Mammary epithelial cell (primary cell): ENCODE measurements at regions of chr9 and their contacts with region 1.

Region 1: DNA sequence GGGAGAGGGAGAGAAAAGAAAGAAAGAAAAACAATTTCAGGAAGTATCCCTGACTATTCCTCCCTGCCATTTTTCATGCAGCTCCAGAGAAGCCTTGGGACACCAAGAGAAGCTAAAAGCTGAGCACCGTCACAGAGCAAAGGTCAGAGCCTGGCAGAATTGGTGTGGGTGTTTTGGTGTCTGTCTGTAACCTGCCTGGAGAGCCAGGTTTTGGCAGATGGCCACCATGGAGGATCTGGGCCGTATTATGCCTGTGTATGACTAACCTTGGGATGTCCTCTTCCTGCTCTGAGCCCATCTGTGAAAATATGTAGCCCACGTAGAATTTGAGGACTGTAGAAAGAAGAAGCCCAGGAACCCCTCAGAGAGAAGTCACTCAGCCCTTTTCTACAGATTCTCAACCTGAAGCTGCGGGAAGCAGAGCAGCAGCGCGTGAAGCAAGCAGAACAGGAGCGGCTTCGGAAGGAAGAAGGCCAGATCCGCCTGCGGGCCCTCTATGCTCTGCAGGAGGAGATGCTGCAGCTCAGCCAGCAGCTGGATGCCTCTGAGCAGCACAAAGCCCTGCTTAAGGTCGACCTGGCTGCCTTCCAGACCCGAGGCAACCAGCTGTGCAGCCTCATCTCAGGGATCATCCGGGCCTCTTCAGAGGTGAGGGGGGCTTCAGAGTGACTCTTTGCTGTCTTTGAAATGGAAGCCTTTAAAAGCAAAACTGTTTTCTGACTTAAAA is 18.8 kb downstream of the GLE1 start:
- DNase-seq: no peak
- H3K4me3 ChIP-seq: no peak overlapping the region
- H3K27ac ChIP-seq: no peak overlapping the region
- H3K4me1 ChIP-seq: no peaks in the 10 kb centered on the region
- H3K27me3 ChIP-seq: no peaks in the 10 kb centered on the region
- CTCF ChIP-seq: no peak

Region 2: GRCh38 chr9:128175102-128175563 is 348.2 kb before region 1 on chr9:
- CTCF ChIA-PET with region 1: no interaction called
- dilution Hi-C with region 1: no loop called
- in situ Hi-C with region 1: no loop called
- intact Hi-C with region 1: no loop called
- DNase-seq: no peak
- H3K4me3 ChIP-seq: no peak overlapping the region
- H3K27ac ChIP-seq: no peak overlapping the region
- H3K4me1 ChIP-seq: no peaks in the 10 kb centered on the region
- H3K27me3 ChIP-seq: no peaks in the 10 kb centered on the region
- CTCF ChIP-seq: no peak

Region 3: DNA sequence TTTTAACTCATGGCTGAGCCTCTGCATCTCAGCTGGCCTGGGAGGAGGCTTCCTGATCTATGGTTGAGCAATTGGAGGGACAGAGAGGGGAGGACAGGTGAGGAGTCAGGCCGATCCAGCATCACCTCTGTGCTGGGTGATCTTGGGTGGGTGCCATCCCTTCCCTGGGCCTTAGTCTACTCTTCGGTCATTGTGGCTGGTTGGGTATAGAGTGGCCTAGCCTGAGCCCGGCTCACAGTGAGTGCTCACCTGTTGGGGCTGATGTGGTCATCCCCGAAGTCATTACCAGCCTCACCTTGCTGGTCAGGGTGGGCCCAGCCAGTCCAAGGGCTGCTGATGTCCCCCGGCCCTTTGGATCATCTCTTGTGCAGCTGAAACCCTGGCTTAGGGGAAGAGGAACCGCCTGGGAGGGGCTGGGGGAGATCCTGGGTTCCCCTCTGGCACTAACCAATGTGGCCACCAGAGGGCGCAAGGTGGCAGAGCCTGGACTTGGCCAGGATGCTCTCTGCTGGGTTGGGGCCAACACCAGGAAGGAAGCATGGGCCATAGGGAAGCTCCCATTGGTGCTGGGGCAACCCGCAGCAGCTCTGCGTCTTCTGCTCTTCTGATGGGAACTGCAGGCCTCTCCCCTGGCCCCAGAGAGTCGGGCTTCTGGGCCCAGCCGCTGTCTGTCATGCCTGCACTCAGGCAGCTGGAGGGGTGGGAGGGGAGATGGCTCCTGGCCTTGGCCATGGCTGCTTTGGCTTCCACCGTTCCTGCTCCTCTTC is 84.8 kb before region 1 on chr9:
- CTCF ChIA-PET with region 1: no interaction called
- dilution Hi-C with region 1: loop called (anchors 5 kb)
- in situ Hi-C with region 1: no loop called
- intact Hi-C with region 1: no loop called
- DNase-seq: peak; percentile 47
- H3K4me3 ChIP-seq: no peak overlapping the region
- H3K27ac ChIP-seq: no peak overlapping the region
- H3K4me1 ChIP-seq: no peaks in the 10 kb centered on the region
- H3K27me3 ChIP-seq: no peaks in the 10 kb centered on the region
- CTCF ChIP-seq: peak; percentile 78 to 96

Region 4: DNA sequence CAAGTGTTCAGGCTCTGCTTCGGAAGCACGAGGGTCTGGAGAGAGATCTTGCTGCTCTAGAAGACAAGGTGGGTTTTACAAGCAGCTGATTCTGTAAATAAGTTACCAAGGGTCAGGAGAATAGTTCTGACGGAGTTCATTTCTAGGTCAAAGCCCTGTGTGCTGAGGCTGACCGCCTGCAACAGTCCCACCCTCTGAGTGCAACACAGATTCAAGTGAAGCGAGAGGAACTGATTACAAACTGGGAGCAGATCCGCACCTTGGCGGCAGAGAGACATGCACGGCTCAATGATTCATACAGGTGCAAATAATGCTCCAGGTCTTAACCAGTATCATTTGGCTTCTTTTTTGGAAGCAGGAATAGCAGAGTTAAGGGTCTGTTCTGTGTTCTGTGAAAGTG is 53.8 kb after region 1 on chr9:
- CTCF ChIA-PET with region 1: no interaction called
- dilution Hi-C with region 1: no loop called
- in situ Hi-C with region 1: no loop called
- intact Hi-C with region 1: no loop called
- DNase-seq: no peak
- H3K4me3 ChIP-seq: no peak overlapping the region
- H3K27ac ChIP-seq: no peak overlapping the region
- H3K4me1 ChIP-seq: no peaks in the 10 kb centered on the region
- H3K27me3 ChIP-seq: no peaks in the 10 kb centered on the region
- CTCF ChIP-seq: no peak

Region 5: GRCh38 chr9:128607642-128608350 is 84.4 kb after region 1 on chr9:
- CTCF ChIA-PET with region 1: no interaction called
- dilution Hi-C with region 1: loop called (anchors 5 kb)
- in situ Hi-C with region 1: no loop called
- intact Hi-C with region 1: no loop called
- DNase-seq: no peak
- H3K4me3 ChIP-seq: no peak overlapping the region
- H3K27ac ChIP-seq: no peak overlapping the region
- H3K4me1 ChIP-seq: no peaks in the 10 kb centered on the region
- H3K27me3 ChIP-seq: no peaks in the 10 kb centered on the region
- CTCF ChIP-seq: no peak

Region 6: GRCh38 chr9:129569502-129570449 is 1046.4 kb after region 1 on chr9:
- CTCF ChIA-PET with region 1: no interaction called
- dilution Hi-C with region 1: no loop called
- in situ Hi-C with region 1: no loop called
- intact Hi-C with region 1: no loop called
- DNase-seq: no peak
- H3K4me3 ChIP-seq: no peak overlapping the region
- H3K27ac ChIP-seq: no peak overlapping the region
- H3K4me1 ChIP-seq: peaks cover 30% of the 10 kb centered on the region
- H3K27me3 ChIP-seq: no peaks in the 10 kb centered on the region
- CTCF ChIP-seq: peak; percentile 11 to 35